ENCODE measurements at regions of chr3 and their contacts with region 1.

Region 1: GRCh38 chr3:15815696-15816095 is 17.9 kb upstream of the ANKRD28 start:
- DNase-seq: no peak
- H3K4me3 ChIP-seq: no peak overlapping the region
- H3K27ac ChIP-seq: no peak overlapping the region
- H3K4me1 ChIP-seq: peaks cover 0 to 25% (median 0%) of the 10 kb centered on the region in 3 donors
- H3K27me3 ChIP-seq: no peaks in the 10 kb centered on the region
- CTCF ChIP-seq: peak in 5 of 6 experiments; percentile 20 to 61 (median 43)
- POLR2A ChIP-seq: no peak

Region 2: GRCh38 chr3:15527031-15527459 is 288.7 kb before region 1 on chr3:
- intact Hi-C with region 1: no loop called
- DNase-seq: no peak
- H3K4me3 ChIP-seq: no peak overlapping the region
- H3K27ac ChIP-seq: no peak overlapping the region
- H3K4me1 ChIP-seq: no peaks in the 10 kb centered on the region
- H3K27me3 ChIP-seq: no peaks in the 10 kb centered on the region
- CTCF ChIP-seq: peak in 1 of 6 experiments; percentile 5
- POLR2A ChIP-seq: no peak

Region 3: DNA sequence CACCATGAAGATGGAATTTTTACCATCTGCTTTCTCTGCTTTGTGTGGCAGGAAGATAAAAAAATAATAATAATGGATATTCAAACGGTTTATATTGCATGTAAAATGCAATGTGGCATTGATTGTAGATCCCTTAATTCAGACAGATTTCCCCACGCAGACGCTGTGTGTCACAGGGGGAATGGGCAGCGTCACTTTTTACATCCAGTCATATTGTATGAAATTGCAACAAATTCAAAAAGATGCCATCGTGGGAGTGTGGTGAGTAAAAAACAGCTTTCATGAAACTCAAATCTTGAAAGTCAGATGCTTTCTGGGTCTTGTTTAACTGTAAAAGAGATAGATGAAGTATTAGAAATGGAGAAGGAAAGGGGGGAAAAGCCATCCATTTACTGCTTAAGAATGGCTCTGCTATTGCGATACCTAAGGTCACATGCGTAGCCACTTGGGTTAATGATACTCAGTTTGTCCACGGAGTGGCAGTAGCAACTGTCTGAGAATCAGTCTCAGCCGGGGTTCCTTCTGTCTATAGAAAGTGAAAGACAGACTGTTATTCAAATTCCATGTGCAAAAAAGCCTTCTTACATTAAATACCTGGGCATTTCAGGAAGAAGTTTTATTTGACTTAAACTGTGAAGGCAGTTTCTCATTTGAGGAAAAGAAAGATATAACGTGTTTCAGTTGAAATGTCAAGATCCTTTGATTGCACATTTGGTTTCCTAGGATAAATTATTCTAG is 185.7 kb before region 1 on chr3:
- intact Hi-C with region 1: loop called (anchors 5 kb)
- DNase-seq: no peak
- H3K4me3 ChIP-seq: peak overlapping the region in 3 of 4 donors; percentile 20 to 24 (median 24)
- H3K27ac ChIP-seq: peak overlapping the region in 2 of 4 donors; percentile 32 to 65
- H3K4me1 ChIP-seq: peaks cover 9 to 29% (median 18%) of the 10 kb centered on the region in 3 donors
- H3K27me3 ChIP-seq: no peaks in the 10 kb centered on the region
- CTCF ChIP-seq: peak; percentile 19 to 79 (median 69)
- POLR2A ChIP-seq: no peak

Region 4: DNA sequence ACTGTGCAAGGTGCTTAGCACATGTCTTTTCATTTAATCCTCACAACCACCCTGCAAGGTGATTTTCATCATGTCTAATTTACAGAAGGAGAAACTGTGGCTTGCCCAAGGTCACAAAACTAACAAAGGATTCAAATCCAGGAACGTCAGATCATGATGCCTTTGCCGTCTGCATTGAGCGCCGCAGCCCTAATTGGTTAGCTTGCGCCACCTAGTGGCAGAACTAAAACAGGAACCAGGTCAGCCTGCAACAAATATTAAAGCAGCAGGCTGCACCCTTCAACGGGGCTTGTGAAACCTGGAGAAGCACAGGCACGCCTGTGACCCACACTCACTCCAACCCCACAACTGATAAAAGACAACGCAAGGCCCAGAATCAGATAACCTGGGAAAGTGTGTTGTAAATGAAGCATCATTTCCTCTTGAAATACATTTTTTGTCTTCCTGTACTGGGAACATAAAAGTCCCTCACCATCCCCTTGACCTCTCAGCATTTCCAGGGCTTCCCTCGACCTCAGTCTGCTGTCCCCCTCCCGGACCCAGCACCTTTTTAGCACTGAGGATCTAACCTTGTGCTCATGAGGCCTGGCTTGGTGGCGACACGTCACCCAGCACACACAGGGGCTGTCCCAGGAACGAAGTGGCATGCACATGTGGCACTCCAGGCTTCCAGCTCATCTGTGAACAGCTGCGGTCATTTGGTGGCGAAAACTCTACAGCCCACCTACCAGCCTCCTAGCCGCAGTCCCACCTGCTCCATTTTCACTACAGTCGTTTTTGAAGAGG is 431.8 kb after region 1 on chr3:
- intact Hi-C with region 1: loop called (anchors 10 kb)
- DNase-seq: peak; percentile 28
- H3K4me3 ChIP-seq: no peak overlapping the region
- H3K27ac ChIP-seq: no peak overlapping the region
- H3K4me1 ChIP-seq: peaks cover 0 to 8% (median 6%) of the 10 kb centered on the region in 3 donors
- H3K27me3 ChIP-seq: peaks cover 0 to 9% (median 0%) of the 10 kb centered on the region in 4 donors
- CTCF ChIP-seq: peak; percentile 87 to 97 (median 93)
- POLR2A ChIP-seq: no peak

Measured in esophagus squamous epithelium (tissue), 5 donors.